A549 (cell line): ENCODE measurements at regions of chr1 and their contacts with region 1.

Region 1: DNA sequence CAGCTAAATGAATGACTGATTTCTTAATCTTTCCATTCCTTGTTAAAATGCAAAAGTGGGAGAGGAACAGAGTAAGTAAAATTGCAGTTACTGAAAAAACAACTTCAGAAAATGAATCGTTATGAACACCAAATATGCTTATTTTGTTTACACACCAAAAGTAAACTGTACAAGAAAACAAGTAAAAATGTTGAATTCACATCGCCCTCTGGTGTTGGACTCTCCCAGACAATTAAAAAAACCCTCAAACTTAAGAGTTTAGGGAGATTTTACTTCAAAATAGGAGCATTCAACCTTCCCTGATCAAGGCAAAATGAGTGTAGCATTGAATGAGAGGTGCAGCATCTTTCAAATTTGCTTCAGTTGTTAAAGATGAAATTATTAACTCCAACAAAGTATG is 19.4 kb upstream of the ESRRG start:
- DNase-seq: peak in 1 of 2 experiments; percentile 11
- ATAC-seq: no peak
- H3K4me3 ChIP-seq: no peak overlapping the region
- H3K27ac ChIP-seq: no peak overlapping the region
- H3K4me1 ChIP-seq: no peaks in the 10 kb centered on the region
- CTCF ChIP-seq: peak; percentile 26; the same call in 1 of the 3 replicates
- EP300 ChIP-seq: no peak
- POLR2A ChIP-seq: no peak
- RAD21 ChIP-seq: peak; percentile 21 to 29; a peak in 1 of 5 replicates

Region 2: GRCh38 chr1:216702170-216702569 is 40.5 kb before region 1 on chr1:
- CTCF ChIA-PET with region 1: no interaction called
- POLR2A ChIA-PET with region 1: no interaction called
- DNase-seq: no peak
- ATAC-seq: no peak
- H3K4me3 ChIP-seq: no peak overlapping the region
- H3K27ac ChIP-seq: no peak overlapping the region
- H3K4me1 ChIP-seq: no peaks in the 10 kb centered on the region
- CTCF ChIP-seq: no peak
- EP300 ChIP-seq: no peak
- POLR2A ChIP-seq: no peak
- RAD21 ChIP-seq: no peak

Region 3: DNA sequence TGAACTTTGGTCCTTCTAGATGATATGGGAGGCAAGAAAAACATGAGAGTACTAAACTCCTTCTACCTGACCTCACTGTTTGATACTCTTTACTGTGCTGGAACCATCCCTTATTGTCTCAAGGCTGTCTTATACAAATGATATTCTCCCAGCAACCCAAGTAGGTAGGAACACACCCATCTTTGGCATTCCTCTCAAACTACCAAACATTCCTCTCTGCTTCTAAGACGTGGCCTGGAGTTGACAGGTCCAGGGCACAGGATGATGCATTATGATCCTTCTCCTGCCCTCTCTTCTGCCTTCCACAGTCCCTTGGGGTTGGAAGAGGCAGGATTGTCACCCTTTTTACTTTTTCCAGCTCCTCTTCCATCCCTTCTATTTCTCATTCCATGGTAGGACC is 979.1 kb after region 1 on chr1:
- CTCF ChIA-PET with region 1: no interaction called
- POLR2A ChIA-PET with region 1: interaction called, 10 read pairs
- DNase-seq: peak in 1 of 2 experiments; percentile 85
- ATAC-seq: peak; percentile 81 to 86
- H3K4me3 ChIP-seq: no peak overlapping the region
- H3K27ac ChIP-seq: peak overlapping the region; percentile 25 to 65; a peak in 4 of 6 replicates
- H3K4me1 ChIP-seq: peaks cover 35% of the 10 kb centered on the region
- CTCF ChIP-seq: no peak
- EP300 ChIP-seq: no peak
- POLR2A ChIP-seq: no peak
- RAD21 ChIP-seq: no peak